ENCODE measurements at regions of chr6 and their contacts with region 1.

Region 1: GRCh38 chr6:44257025-44257752 is at the start of gene SLC35B2:
- DNase-seq: peak; percentile 73
- H3K4me3 Mint-ChIP-seq: peak within 1 kb of the TSS; percentile 83
- H3K27ac Mint-ChIP-seq: peak within 1 kb of the TSS; percentile 84
- H3K4me1 Mint-ChIP-seq: peaks cover 61% of the 10 kb centered on the region
- H3K27me3 Mint-ChIP-seq: no peaks in the 10 kb centered on the region
- total RNA-seq, gene SLC35B2: 35.8 to 37.2 TPM

Region 2: DNA sequence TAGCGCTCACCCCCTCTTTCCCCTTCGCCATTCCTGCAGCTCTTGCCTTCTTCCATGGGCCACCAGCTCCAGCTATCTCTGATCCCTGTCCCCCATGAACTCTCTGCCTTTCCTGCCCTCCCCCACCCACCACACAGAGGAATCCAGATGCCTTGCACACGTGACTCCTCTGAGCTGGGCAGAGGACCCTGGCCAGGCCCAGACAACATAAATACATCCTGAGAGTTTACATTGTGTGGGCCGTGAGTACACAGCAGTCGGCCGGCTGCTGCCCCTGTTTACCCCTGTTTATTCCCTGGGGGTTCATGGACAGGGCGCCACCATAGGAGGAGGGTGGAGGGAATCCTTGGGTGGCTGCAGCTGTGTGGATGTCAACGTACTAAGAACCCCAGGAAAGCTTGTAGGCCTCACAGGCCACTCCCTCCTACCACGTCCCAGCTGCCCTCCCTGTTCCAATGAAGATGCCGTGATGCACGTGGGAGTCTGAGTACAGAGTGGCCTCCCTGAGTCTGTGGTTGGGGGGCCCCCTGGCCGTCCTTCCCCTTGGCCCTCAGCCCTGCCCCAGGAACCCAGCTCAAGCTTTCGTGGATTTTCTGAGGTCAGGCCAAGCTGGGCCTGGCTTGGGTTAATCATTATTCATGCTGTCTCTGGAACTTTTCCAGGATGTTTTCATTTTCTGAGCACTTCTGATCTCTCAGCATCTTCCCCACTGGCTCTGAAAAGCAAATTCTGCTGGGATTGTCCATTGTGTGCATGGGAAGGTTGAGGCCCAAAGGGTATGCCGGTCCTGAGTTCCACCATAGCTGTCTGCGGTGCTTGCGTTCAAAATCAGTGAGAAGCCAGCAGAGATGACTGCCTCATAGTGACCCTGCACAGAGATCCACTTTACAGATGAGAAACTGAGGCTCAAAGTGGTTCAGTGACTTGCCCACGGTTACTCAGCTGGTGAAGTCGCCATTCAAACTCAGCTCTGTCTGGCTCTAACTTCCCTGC is 266.3 kb before region 1 on chr6:
- CTCF ChIA-PET with region 1: no interaction called
- POLR2A ChIA-PET with region 1: no interaction called
- DNase-seq: no peak
- H3K4me3 Mint-ChIP-seq: no peak overlapping the region
- H3K27ac Mint-ChIP-seq: no peak overlapping the region
- H3K4me1 Mint-ChIP-seq: no peaks in the 10 kb centered on the region
- H3K27me3 Mint-ChIP-seq: peaks cover 7% of the 10 kb centered on the region

Region 3: GRCh38 chr6:44221291-44221960 is 35.8 kb before region 1 on chr6:
- CTCF ChIA-PET with region 1: interaction called, 15 read pairs
- POLR2A ChIA-PET with region 1: interaction called, 23 read pairs
- DNase-seq: peak; percentile 82
- H3K4me3 Mint-ChIP-seq: no peak overlapping the region
- H3K27ac Mint-ChIP-seq: peak overlapping the region; percentile 3
- H3K4me1 Mint-ChIP-seq: peaks cover 46% of the 10 kb centered on the region
- H3K27me3 Mint-ChIP-seq: peaks cover 15% of the 10 kb centered on the region

Region 4: DNA sequence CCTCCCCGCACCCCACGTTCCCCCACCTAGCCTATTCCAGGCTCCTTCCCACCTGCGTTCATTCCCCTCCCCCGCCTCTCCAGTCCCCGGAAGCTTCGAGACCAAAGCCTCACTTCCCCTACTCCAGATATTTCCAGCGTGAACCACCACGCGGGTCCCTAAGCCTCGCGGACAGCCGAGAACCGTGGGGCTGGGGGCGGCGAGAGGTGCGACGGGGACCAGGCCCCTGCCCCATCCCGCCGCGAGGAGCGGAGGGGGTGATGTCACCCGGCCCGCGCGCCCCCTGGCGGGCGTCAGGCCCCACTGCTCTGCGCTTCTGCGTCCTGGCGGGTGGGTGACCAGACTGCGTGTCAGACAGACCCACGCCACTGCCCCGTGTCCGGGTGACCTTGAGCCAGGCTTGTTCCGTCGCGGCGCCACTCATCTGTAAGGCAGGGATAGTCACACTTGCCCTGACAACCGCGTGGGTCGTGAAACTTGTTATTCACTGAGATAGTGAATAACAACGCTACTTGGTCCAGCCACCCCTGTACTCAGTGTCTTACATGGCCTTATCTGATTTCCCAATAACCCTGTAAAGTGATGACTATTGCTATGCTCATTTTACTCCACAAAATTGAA is 19.3 kb before region 1 on chr6:
- CTCF ChIA-PET with region 1: interaction called, 11 read pairs
- POLR2A ChIA-PET with region 1: interaction called, 5 read pairs
- DNase-seq: peak; percentile 84
- H3K4me3 Mint-ChIP-seq: peak overlapping the region; percentile 81
- H3K27ac Mint-ChIP-seq: peak overlapping the region; percentile 89
- H3K4me1 Mint-ChIP-seq: peaks cover 28% of the 10 kb centered on the region
- H3K27me3 Mint-ChIP-seq: no peaks in the 10 kb centered on the region

Region 5: DNA sequence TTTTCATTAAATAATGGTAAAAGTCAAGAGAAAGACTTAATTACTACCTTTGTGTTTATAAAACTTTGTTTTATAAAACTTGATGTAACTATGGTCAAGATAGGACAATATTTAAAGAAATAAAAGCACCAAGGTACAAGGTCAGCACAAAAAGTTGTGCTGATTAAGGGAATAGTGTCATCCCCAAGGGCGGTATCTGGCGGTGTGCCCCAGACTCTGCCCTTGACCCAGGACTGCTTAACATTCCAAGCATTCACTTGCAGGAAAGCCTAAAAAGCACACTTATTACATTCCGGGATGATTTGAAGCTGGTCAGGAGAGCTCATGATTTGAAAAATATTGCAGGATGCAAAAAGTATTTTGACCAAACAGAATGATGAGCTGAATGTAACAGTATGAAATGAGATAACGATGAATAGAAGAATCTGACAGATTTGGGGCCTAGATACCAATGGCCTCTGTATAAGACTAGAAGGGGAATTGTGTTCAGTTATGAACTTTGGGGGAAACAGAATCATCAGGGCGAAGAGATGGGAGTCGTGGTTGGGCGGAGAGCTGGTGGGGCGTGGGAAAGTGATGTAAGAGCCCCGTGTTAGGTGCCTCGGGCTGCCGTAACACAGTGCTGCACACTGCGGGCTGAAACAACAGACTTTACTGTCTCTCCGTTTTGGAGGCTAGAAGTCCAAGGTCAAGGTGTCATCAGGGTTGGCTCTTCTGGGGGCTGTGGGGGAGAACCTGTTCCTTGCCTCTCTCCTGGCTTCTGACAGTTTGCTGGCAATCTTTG is 207.5 kb after region 1 on chr6:
- CTCF ChIA-PET with region 1: no interaction called
- POLR2A ChIA-PET with region 1: no interaction called
- DNase-seq: no peak
- H3K4me3 Mint-ChIP-seq: no peak overlapping the region
- H3K27ac Mint-ChIP-seq: no peak overlapping the region
- H3K4me1 Mint-ChIP-seq: peaks cover 4% of the 10 kb centered on the region
- H3K27me3 Mint-ChIP-seq: peaks cover 5% of the 10 kb centered on the region

Region 6: DNA sequence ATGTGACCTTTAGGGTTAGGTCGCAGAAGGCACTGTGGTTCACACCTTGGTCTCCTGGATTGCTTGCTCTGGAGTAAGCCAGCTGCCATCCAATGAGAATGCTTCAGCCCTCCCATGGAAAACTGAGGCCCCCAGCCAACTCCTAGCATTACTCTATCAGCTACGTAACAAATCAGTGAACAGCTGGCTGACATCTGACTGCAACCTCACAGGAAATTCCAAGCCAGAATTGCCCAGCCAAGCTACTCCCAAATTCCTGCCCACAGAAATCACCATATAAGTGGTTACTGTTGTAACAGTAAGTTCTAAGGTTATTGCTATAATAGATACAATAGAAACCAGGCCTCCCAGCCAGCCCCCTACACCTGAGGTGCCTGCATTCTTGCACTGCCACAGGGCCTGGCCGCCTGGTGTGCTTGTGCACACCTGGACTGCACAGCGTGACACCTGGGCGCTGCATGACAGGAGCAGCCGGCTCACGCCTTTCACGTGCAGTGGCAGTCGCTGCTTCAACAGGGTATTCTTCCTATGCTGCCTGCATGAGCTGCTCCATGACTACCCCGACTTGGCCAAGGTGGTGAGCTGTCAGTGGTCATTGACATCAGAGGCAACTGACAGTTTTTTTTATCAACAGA is 641.2 kb after region 1 on chr6:
- CTCF ChIA-PET with region 1: no interaction called
- POLR2A ChIA-PET with region 1: no interaction called
- DNase-seq: no peak
- H3K4me3 Mint-ChIP-seq: no peak overlapping the region
- H3K27ac Mint-ChIP-seq: no peak overlapping the region
- H3K4me1 Mint-ChIP-seq: peaks cover 3% of the 10 kb centered on the region
- H3K27me3 Mint-ChIP-seq: no peaks in the 10 kb centered on the region